Activated CD4-positive, alpha-beta memory T cell treated with anti-CD3 and anti-CD28 coated beads for 36 hours (primary cell): ENCODE measurements at regions of chr1 and their contacts with region 1.

Region 1: DNA sequence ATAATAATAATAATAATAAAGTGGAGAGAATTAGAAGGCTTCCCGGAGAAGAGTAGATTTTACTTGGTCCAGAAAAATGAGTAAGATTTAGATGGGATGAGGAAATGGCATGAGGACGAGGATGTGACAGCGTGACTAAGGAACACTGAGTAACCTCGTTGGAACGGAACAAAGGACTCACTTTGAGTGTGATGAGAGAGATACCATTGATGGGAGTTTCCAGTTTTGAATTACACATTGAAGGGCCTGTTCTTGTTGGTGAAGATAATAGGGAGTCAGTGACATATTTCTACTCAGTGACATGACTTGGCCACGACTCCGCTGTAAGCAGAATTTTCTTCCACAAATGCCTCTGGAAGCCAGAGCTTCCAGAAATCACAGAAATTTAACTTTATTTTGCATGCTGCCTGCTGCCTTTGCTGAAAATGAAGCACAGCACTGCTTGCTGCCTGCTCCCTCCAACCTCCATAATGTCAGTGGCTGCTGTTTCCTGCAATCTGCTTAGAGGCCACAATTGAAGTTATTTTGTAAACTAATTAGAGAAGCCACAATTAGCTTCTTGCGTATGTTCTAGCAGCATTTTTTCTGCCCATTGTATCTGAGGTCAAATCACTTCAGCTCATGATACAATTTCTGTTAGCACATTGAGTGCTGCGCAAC is 33.7 kb upstream of the FBXO28 start:
- DNase-seq: no peak
- H3K4me3 Mint-ChIP-seq: no peak overlapping the region
- H3K27ac Mint-ChIP-seq: no peak overlapping the region
- H3K4me1 Mint-ChIP-seq: peaks cover 2% of the 10 kb centered on the region
- H3K27me3 Mint-ChIP-seq: peaks cover 10% of the 10 kb centered on the region

Region 2: DNA sequence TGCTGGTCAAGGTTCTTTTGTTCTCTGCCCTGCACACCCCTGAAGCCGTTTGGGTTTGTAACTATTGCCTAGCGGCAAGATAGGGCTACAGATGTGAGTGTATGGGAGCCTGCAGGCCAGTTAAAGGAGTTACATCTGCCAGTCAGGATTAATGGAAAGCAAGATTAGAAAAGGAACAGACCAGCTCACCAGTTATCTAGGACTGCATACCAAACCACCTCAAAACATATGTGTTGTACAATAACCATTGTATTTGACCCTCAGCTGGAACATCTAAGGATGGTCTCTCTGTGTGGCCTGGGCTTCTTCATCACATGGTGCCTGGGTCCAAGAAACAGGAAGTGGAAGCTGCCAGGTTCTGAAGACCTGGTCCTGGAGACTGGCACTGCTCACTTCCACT is 18.8 kb before region 1 on chr1:
- CTCF ChIA-PET with region 1: no interaction called
- POLR2A ChIA-PET with region 1: no interaction called
- intact Hi-C with region 1: loop called (anchors 2 kb)
- DNase-seq: no peak
- H3K4me3 Mint-ChIP-seq: no peak overlapping the region
- H3K27ac Mint-ChIP-seq: no peak overlapping the region
- H3K4me1 Mint-ChIP-seq: peaks cover 5% of the 10 kb centered on the region
- H3K27me3 Mint-ChIP-seq: no peaks in the 10 kb centered on the region

Region 3: DNA sequence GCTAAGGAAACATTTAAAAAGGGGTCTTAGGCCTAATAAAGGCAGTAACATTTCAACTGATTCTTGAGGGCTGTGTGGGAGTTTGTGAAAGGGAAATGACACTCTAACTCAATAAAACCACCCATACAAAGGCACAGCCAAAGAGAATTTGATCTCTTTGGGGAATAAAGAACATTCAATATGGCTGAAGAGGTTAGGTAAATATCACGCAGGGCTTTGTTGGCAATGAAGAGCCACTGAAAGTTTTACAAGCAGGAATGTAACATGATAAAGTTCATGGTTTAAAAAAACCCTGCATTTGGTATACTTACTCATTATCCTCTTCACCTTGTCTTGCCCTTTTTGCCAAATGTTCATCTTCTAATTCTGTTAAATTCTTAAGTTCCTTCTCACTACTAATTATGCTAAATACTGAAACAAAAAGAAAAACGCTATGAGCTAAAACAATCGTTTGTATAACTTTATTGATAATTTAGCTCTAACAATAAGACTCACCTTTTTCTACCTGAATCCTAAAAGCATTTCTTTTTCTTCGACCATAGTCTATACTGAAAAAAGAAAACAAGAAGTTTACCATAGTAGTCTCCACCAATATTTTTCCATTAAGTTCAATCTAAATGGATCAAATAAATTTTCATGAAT is 237.3 kb after region 1 on chr1:
- CTCF ChIA-PET with region 1: no interaction called
- POLR2A ChIA-PET with region 1: no interaction called
- intact Hi-C with region 1: no loop called
- DNase-seq: no peak
- H3K4me3 Mint-ChIP-seq: no peak overlapping the region
- H3K27ac Mint-ChIP-seq: no peak overlapping the region
- H3K4me1 Mint-ChIP-seq: peaks cover 15% of the 10 kb centered on the region
- H3K27me3 Mint-ChIP-seq: no peaks in the 10 kb centered on the region